ENCODE measurements at regions of chr6 and their contacts with region 1.

Region 1: GRCh38 chr6:41920921-41921711 is at the starts of genes BYSL and MED20:
- DNase-seq: peak; percentile 71
- H3K4me3 ChIP-seq: peak within 1 kb of the TSS; percentile 98
- CTCF ChIP-seq: peak; percentile 94

Region 2: DNA sequence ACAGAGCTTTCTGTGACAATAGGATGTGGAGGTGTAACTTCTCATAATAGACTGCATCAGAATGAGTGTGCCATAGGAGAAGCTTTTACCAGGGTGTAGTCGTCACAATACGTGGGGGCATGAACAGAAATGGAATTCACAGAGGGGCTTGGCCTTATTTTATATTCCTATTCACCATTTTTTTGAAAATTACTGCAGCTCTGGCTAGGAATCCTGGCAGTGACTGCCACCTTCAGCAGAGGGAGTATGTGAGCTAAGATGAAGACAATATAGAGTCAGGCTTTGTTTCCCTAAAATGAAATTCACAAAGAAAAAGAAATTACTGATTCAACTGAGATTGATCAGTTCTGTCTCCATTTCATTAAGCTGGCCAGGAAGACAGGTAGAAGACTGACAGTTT is 119.7 kb before region 1 on chr6:
- CTCF ChIA-PET with region 1: interaction called, 16 read pairs
- POLR2A ChIA-PET with region 1: no interaction called
- DNase-seq: no peak
- H3K4me3 ChIP-seq: no peak overlapping the region
- CTCF ChIP-seq: peak; percentile 60

Region 3: GRCh38 chr6:41878961-41879405 is 42.1 kb before region 1 on chr6:
- CTCF ChIA-PET with region 1: interaction called, 17 read pairs
- POLR2A ChIA-PET with region 1: no interaction called
- DNase-seq: peak; percentile 53
- H3K4me3 ChIP-seq: no peak overlapping the region
- CTCF ChIP-seq: no peak

Region 4: GRCh38 chr6:41901882-41902519 is 19.1 kb before region 1 on chr6:
- CTCF ChIA-PET with region 1: interaction called, 78 read pairs
- POLR2A ChIA-PET with region 1: no interaction called
- DNase-seq: no peak
- H3K4me3 ChIP-seq: no peak overlapping the region
- CTCF ChIP-seq: peak; percentile 14

Region 5: DNA sequence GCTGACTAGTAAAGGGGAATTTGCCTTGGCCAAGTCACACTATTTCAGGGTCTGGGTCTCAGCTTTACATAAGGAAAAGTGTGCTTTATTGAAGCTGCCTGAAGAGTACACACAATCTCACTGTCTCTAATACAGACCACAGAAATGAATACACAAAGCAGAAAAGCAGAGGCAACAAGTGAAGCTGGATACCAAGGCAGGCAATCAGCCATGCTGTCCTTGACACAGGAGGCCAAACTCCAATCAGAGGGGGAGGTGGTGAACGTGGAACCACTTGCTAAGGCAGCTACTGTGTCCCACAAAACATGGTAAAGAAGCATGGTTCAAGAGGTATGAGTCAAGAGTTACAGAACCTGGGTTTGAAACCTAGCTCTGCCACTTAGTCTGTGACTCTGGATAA is 42.3 kb after region 1 on chr6:
- CTCF ChIA-PET with region 1: interaction called, 14 read pairs
- POLR2A ChIA-PET with region 1: no interaction called
- DNase-seq: no peak
- H3K4me3 ChIP-seq: no peak overlapping the region
- CTCF ChIP-seq: no peak

Region 6: GRCh38 chr6:42050266-42051032 is 129.3 kb after region 1 on chr6 and contains the start of gene TAF8:
- CTCF ChIA-PET with region 1: interaction called, 46 read pairs
- POLR2A ChIA-PET with region 1: interaction called, 5 read pairs
- DNase-seq: peak; percentile 59
- H3K4me3 ChIP-seq: peak within 1 kb of the TSS; percentile 81
- CTCF ChIP-seq: no peak

Measured in AG04449 (cell line).